Endothelial cell of umbilical vein (primary cell): ENCODE measurements at regions of chr1 and their contacts with region 1.

Region 1: DNA sequence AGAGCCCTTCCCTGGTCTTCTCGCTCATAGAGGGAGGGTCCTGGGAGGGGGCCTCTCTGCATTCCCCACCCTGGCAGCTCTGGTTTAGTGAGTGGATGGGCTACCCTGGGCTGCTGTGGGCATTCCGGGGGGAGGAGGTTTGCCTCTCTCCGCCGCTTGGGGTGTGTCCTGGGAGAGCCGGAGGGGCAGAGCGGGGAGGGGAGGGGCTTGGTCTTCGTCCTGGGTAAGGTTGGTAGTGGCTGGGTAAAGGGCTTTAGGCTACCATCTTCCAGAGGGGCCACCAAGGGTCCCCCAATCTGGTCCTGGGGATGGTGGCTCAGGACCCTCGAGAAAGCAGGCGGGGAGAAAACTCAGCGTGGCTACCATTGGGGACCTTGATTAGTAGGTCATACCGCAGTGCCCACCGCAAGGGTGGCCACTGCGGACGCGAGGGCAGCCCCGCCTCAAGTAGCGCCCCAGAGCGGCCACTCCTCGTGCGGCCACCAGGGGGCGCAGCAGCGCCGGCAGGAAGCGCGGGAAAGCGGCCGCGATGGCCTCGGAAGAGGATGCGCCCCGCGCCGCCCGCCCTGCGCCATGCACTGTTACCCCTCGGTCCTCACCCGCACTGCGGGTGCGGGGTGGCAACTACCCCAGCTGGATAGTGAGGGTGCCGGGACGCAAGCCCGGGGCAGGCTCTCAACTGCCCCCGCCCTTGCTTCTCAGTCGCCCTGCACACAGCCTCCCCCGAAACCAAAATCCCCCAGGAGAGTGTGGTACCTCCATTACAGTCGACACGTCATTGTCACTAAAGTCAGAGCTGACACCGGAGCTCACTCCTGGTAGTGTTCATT is 44.1 kb upstream of the SLC25A33 start:
- DNase-seq: peak; percentile 42
- H3K4me3 ChIP-seq: peak overlapping the region in 2 of 3 experiments; percentile 15 to 22
- H3K27ac ChIP-seq: no peak overlapping the region
- H3K4me1 ChIP-seq: no peaks in the 10 kb centered on the region
- H3K27me3 ChIP-seq: peaks cover 0 to 4% of the 10 kb centered on the region in 2 experiments
- CTCF ChIP-seq: peak; percentile 92 to 97
- POLR2A ChIP-seq: no peak

Region 2: DNA sequence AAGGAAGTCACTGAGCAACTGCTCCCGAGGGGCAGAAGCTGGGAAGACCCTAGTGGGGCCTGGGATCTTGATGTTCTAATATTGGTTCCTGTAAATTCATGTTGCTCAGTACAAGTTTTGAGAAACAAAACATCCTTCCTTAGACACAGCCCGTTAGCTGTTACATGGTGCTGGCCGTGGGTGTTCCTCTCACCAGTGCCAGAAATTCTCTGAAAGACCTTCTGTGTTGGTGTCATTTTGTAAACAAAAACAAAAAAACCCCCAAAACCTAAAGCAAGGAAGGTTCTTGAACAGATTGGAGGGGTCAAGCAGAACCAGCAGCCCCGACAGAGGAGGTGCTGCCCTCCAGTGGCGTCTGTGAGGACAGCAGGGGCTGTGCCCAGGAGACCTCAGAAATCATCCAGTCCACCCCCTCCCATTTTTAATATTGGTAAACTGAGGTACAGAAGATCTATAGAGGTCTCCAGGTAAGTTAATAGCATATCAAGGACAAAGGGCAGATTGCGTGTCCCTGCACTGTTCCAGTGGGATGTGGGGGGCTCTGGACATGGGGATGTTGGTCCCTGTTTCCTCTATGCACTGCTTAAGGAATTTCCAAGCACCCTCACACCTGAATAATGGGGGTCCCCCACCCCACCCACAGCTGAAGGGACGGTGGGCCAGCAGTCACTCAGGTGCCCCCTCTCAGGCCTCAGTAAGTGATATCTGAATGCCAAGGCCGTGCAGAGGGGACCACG is 507.1 kb before region 1 on chr1:
- CTCF ChIA-PET with region 1: no interaction called
- POLR2A ChIA-PET with region 1: no interaction called
- dilution Hi-C with region 1: no loop called
- intact Hi-C with region 1: no loop called
- DNase-seq: peak; percentile 64
- H3K4me3 ChIP-seq: no peak overlapping the region
- H3K27ac ChIP-seq: peak overlapping the region; percentile 50
- H3K4me1 ChIP-seq: peaks cover 16% of the 10 kb centered on the region
- H3K27me3 ChIP-seq: no peaks in the 10 kb centered on the region
- CTCF ChIP-seq: peak; percentile 88 to 93
- POLR2A ChIP-seq: no peak

Region 3: GRCh38 chr1:9270290-9270883 is 224.8 kb before region 1 on chr1:
- CTCF ChIA-PET with region 1: interaction called, 232 read pairs
- POLR2A ChIA-PET with region 1: no interaction called
- dilution Hi-C with region 1: no loop called
- intact Hi-C with region 1: loop called (anchors 1 kb)
- DNase-seq: no peak
- H3K4me3 ChIP-seq: no peak overlapping the region
- H3K27ac ChIP-seq: no peak overlapping the region
- H3K4me1 ChIP-seq: peaks cover 4% of the 10 kb centered on the region
- H3K27me3 ChIP-seq: no peaks in the 10 kb centered on the region
- CTCF ChIP-seq: no peak
- POLR2A ChIP-seq: no peak

Region 4: DNA sequence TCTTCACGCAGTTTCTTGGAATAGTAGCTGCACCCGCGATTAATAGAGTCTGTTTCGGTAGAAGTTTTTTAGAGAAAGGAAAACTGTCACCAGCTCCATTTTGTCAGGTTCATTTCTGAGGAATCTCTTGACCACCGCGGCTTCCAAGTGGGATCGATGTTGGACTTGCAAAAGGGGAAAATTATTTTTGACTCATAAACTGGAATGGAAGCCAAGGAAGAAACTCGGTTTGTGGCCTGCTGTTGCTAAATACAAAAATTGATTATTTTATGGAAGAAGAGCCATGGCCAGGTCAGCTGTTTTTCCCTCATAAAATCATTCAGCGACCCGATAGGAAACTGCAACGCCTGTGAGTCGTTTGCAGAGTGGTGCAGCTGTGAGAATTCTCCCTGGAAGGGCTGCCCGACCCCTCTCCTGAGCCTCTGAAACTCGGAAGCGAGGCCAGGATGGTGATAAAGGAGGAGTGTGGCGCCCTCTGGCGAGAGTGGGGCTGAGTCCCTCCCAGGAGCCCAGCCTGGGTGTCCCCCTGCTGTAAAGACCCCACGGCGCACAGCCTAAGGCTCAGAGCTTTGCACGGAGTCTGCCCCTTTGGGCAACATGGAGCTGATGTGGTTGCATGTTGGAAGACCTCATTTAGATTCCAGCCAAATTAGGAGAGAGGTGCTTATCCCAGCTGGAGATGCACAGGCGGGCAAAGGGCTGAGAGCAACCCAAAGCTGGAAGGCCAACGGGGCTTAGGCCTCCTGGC is 39.5 kb before region 1 on chr1:
- CTCF ChIA-PET with region 1: interaction called, 51 read pairs
- POLR2A ChIA-PET with region 1: no interaction called
- dilution Hi-C with region 1: no loop called
- intact Hi-C with region 1: loop called (anchors 1 kb)
- DNase-seq: peak; percentile 79
- H3K4me3 ChIP-seq: no peak overlapping the region
- H3K27ac ChIP-seq: no peak overlapping the region
- H3K4me1 ChIP-seq: no peaks in the 10 kb centered on the region
- H3K27me3 ChIP-seq: peaks cover 0 to 4% of the 10 kb centered on the region in 2 experiments
- CTCF ChIP-seq: peak; percentile 85 to 91
- POLR2A ChIP-seq: no peak

Region 5: GRCh38 chr1:9476790-9477463 is 18.2 kb before region 1 on chr1:
- CTCF ChIA-PET with region 1: interaction called, 10 read pairs
- POLR2A ChIA-PET with region 1: no interaction called
- dilution Hi-C with region 1: no loop called
- intact Hi-C with region 1: no loop called
- DNase-seq: no peak
- H3K4me3 ChIP-seq: no peak overlapping the region
- H3K27ac ChIP-seq: no peak overlapping the region
- H3K4me1 ChIP-seq: no peaks in the 10 kb centered on the region
- H3K27me3 ChIP-seq: no peaks in the 10 kb centered on the region
- CTCF ChIP-seq: no peak
- POLR2A ChIP-seq: no peak